Activated CD4-positive, alpha-beta T cell treated with anti-CD3 and anti-CD28 coated beads for 36 hours (primary cell): ENCODE measurements at regions of chr17 and their contacts with region 1.

Region 1: GRCh38 chr17:42566883-42567573 is at the start of gene MLX:
- DNase-seq: peak; percentile 95
- ATAC-seq: peak; percentile 74
- H3K4me3 Mint-ChIP-seq: peak within 1 kb of the TSS; percentile 96
- H3K27ac Mint-ChIP-seq: peak within 1 kb of the TSS; percentile 96
- H3K4me1 Mint-ChIP-seq: peaks cover 35% of the 10 kb centered on the region
- H3K27me3 Mint-ChIP-seq: no peaks in the 10 kb centered on the region
- total RNA-seq, gene MLX: 38.7 to 40.7 TPM

Region 2: GRCh38 chr17:42399948-42400843 is 166.8 kb before region 1 on chr17:
- CTCF ChIA-PET with region 1: no interaction called
- POLR2A ChIA-PET with region 1: interaction called, 15 read pairs
- intact Hi-C with region 1: no loop called
- DNase-seq: no peak
- ATAC-seq: no peak
- H3K4me3 Mint-ChIP-seq: no peak overlapping the region
- H3K27ac Mint-ChIP-seq: peak overlapping the region; percentile 2
- H3K4me1 Mint-ChIP-seq: peaks cover 16% of the 10 kb centered on the region
- H3K27me3 Mint-ChIP-seq: peaks cover 2% of the 10 kb centered on the region

Region 3: GRCh38 chr17:42536048-42536371 is 31.0 kb before region 1 on chr17 and contains the start of gene NAGLU:
- CTCF ChIA-PET with region 1: no interaction called
- POLR2A ChIA-PET with region 1: no interaction called
- intact Hi-C with region 1: loop called in 1 of 2 experiments (anchors 1 kb)
- DNase-seq: peak; percentile 92
- ATAC-seq: peak; percentile 87
- H3K4me3 Mint-ChIP-seq: peak within 1 kb of the TSS; percentile 86
- H3K27ac Mint-ChIP-seq: peak within 1 kb of the TSS; percentile 90
- H3K4me1 Mint-ChIP-seq: peaks cover 30% of the 10 kb centered on the region
- H3K27me3 Mint-ChIP-seq: no peaks in the 10 kb centered on the region
- total RNA-seq, gene NAGLU: 9.7 to 12.5 TPM

Region 4: DNA sequence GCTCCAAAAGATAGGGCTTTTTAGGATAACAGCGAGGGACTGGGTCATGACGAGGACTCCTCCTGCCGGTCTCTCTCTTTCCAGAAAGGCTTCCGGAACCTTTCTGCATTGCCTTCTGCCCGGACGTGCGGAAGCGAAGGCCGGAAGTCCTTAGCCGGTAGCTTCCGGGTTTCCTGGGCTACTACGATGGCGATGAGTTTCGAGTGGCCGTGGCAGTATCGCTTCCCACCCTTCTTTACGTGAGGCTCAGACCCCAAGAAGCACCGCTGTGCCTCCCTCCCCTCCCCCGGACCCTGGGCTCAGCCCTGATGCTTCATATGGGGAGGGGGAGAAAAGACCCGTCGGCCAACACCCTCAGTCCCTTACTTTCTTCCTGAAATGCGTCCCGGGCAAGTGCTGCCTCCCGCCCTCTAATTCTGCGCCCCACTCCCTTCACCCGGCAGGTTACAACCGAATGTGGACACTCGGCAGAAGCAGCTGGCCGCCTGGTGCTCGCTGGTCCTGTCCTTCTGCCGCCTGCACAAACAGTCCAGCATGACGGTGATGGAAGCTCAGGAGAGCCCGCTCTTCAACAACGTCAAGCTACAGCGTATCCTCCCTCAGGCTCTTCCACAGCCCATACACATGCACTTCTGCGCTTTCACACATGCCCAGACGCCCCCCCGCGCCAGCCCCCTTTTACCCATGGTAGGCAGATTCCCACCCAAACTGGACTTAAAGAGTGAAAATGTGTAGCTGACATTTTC is 206.4 kb after region 1 on chr17 and contains the start of gene VPS25:
- CTCF ChIA-PET with region 1: no interaction called
- POLR2A ChIA-PET with region 1: no interaction called
- intact Hi-C with region 1: no loop called
- DNase-seq: peak; percentile 81
- ATAC-seq: peak; percentile 97
- H3K4me3 Mint-ChIP-seq: peak within 1 kb of the TSS; percentile 96
- H3K27ac Mint-ChIP-seq: peak within 1 kb of the TSS; percentile 95
- H3K4me1 Mint-ChIP-seq: peaks cover 22% of the 10 kb centered on the region
- H3K27me3 Mint-ChIP-seq: no peaks in the 10 kb centered on the region
- total RNA-seq, gene VPS25: 62.5 to 64.0 TPM

Region 5: DNA sequence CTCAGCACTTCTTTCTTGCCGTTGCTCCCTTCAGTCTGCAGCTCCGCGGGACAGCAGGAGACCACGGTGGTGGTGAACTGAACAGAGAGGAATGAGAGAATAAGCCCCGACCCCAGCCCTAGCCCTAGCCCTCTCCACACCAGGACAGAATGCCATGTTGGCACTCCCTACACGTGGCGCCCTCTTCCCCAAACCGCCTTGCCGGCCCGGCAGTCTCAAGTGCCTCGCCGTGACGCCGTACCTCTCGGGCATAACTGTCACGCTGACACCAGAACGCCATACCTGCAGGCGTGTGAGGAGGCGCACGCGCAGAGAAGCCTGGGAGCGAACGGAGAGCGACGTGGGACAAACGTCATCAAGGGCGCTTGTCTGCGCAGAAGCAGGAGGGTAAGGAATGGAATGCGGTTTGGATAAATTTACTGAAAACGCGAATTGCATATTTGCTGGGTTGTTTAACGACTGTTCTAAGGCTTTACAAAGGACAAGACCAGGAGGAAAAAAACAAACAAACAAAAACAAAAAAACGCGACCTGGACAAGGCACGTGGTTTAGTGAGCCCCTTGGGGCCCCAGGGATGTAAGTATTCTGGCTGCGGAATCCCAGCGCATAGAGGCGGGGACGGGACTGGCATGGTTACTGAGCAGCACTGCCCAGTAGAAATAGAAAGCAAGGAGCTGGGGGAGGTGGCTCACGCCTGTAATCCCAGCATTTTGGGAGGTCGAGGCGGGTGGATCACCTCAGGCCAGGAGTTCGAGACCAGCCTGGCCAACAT is 397.3 kb after region 1 on chr17 and contains the start of gene AARSD1:
- CTCF ChIA-PET with region 1: no interaction called
- POLR2A ChIA-PET with region 1: no interaction called
- intact Hi-C with region 1: loop called in 1 of 2 experiments (anchors 1 kb)
- DNase-seq: peak; percentile 95
- ATAC-seq: peak; percentile 95
- H3K4me3 Mint-ChIP-seq: peak within 1 kb of the TSS; percentile 93
- H3K27ac Mint-ChIP-seq: peak within 1 kb of the TSS; percentile 90
- H3K4me1 Mint-ChIP-seq: peaks cover 22% of the 10 kb centered on the region
- H3K27me3 Mint-ChIP-seq: no peaks in the 10 kb centered on the region
- total RNA-seq, gene AARSD1: 40.8 to 58.6 TPM